ENCODE measurements at regions of chr16 and their contacts with region 1.

Region 1: DNA sequence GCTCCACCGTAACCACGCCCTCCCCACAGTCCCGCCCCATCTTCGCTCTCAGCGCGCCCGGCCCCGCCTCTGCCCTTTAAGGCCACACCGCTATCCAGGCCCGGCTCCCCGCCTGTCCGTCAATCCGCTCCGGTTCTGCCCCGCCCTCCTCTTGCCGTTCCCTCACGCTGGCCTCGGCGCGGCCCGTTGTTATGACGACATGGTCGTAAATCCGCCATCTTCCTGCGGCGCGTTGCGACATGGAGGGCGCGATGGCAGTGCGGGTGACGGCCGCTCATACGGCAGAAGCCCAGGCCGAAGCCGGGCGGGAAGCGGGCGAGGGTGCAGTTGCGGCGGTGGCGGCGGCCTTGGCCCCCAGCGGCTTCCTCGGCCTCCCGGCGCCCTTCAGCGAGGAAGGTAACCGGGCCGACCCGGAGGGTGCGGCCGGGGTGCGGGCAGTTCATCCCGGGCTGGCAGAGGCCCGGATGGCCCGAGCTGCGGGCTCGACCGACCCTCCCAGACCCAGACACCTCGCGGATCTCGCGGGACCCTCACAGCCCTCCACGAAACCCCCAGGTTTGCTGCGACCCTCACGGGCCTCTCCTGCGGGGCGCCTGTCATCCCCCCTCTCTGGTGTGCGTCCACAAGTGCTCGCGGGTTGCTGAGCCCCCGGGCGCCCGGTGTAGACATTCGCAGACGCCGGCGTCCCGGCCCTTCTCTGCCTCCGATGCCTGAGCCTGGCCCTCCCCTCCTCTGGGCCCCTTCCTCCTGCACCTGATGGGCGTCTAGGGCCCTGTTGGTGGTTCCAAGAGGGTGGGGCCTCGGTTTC is at the start of gene E4F1:
- DNase-seq: peak; percentile 100
- H3K4me3 ChIP-seq: peak within 1 kb of the TSS; percentile 80 to 98 (median 98)
- H3K27ac ChIP-seq: peak within 1 kb of the TSS; percentile 85 to 95 (median 92)
- H3K4me1 ChIP-seq: peaks cover 0 to 33% (median 26%) of the 10 kb centered on the region in 4 donors
- H3K27me3 ChIP-seq: no peaks in the 10 kb centered on the region
- CTCF ChIP-seq: no peak
- EP300 ChIP-seq: peak in 1 of 4 donors; percentile 37
- POLR2A ChIP-seq: peak; percentile 88 to 92
- total RNA-seq, gene E4F1: 17.4 to 26.9 (median 22.0) TPM

Region 2: GRCh38 chr16:2267913-2268666 is 44.5 kb after region 1 on chr16 and contains the start of gene RNPS1:
- intact Hi-C with region 1: loop called (anchors 5 kb)
- DNase-seq: peak; percentile 98
- H3K4me3 ChIP-seq: peak within 1 kb of the TSS; percentile 70 to 90 (median 78)
- H3K27ac ChIP-seq: peak within 1 kb of the TSS; percentile 87 to 98 (median 96)
- H3K4me1 ChIP-seq: peaks cover 0 to 52% (median 35%) of the 10 kb centered on the region in 4 donors
- H3K27me3 ChIP-seq: no peaks in the 10 kb centered on the region
- CTCF ChIP-seq: no peak
- EP300 ChIP-seq: peak in 2 of 4 donors; percentile 33 to 43
- POLR2A ChIP-seq: peak; percentile 98 to 99
- total RNA-seq, gene RNPS1: 110 to 145 (median 128) TPM

Measured in sigmoid colon (tissue), 7 donors.